Endothelial cell of umbilical vein (primary cell): ENCODE measurements at regions of chr1 and their contacts with region 1.

Region 1: GRCh38 chr1:7224644-7225043 is 439.4 kb downstream of the CAMTA1 start:
- DNase-seq: no peak
- H3K4me3 ChIP-seq: no peak overlapping the region
- H3K27ac ChIP-seq: no peak overlapping the region
- H3K4me1 ChIP-seq: no peaks in the 10 kb centered on the region
- H3K27me3 ChIP-seq: no peaks in the 10 kb centered on the region
- CTCF ChIP-seq: no peak
- POLR2A ChIP-seq: no peak

Region 2: GRCh38 chr1:7576946-7577641 is 352.4 kb after region 1 on chr1:
- CTCF ChIA-PET with region 1: no interaction called
- POLR2A ChIA-PET with region 1: no interaction called
- dilution Hi-C with region 1: no loop called
- intact Hi-C with region 1: loop called (anchors 2 kb)
- DNase-seq: peak; percentile 43
- H3K4me3 ChIP-seq: no peak overlapping the region
- H3K27ac ChIP-seq: no peak overlapping the region
- H3K4me1 ChIP-seq: no peaks in the 10 kb centered on the region
- H3K27me3 ChIP-seq: no peaks in the 10 kb centered on the region
- CTCF ChIP-seq: peak; percentile 17 to 53
- POLR2A ChIP-seq: no peak